A673 (cell line): ENCODE measurements at regions of chr12 and their contacts with region 1.

Region 1: GRCh38 chr12:125124318-125124966 is 59.2 kb downstream of the AACS start:
- DNase-seq: no peak
- H3K4me3 ChIP-seq: no peak overlapping the region
- H3K27ac ChIP-seq: no peak overlapping the region
- H3K4me1 ChIP-seq: no peaks in the 10 kb centered on the region
- H3K27me3 ChIP-seq: no peaks in the 10 kb centered on the region
- CTCF ChIP-seq: no peak

Region 2: GRCh38 chr12:125100551-125101434 is 23.6 kb before region 1 on chr12:
- CTCF ChIA-PET with region 1: no interaction called
- POLR2A ChIA-PET with region 1: no interaction called
- intact Hi-C with region 1: loop called (anchors 1 kb)
- DNase-seq: no peak
- H3K4me3 ChIP-seq: no peak overlapping the region
- H3K27ac ChIP-seq: no peak overlapping the region
- H3K4me1 ChIP-seq: no peaks in the 10 kb centered on the region
- H3K27me3 ChIP-seq: no peaks in the 10 kb centered on the region
- CTCF ChIP-seq: no peak